Mammary epithelial cell (primary cell): ENCODE measurements at regions of chr2 and their contacts with region 1.

Region 1: DNA sequence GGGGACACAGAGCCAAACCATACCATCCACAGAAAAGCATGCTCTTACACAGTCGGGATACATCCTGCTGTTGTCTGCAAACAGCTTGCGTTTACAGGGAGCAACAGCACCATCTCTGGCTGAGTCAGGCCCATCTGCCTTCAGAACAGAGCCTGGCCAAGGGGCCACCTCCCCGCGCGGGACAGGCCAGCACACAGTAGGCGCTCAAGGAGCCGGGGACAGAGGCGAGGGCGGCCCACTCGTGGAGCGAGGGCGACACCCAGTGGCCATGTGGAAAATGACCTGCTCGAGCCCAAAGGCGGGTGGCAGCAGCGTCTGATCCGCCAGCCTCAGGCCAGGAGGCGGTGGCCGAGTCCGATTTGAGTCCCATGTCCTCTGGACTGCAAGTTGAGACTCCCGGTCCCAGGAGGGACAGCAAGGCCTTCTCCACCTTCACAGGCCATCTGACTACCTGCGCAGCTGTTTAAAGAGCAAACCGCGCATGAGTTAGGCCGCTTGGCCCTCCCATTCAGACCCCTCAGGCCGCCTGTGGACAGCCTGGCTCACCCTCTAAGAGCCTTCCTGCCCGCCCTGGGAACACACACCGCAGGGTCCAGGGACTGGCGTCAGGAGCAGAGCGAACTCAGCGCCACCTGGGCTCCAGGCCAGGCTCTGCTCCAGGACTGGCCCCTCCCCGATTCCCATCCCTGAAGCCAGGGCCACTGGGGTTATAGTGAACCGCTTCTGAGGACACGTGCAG is 38.3 kb downstream of the TTC32 start:
- DNase-seq: peak; percentile 26
- H3K4me3 ChIP-seq: no peak overlapping the region
- H3K27ac ChIP-seq: no peak overlapping the region
- H3K4me1 ChIP-seq: peaks cover 26% of the 10 kb centered on the region
- H3K27me3 ChIP-seq: no peaks in the 10 kb centered on the region
- CTCF ChIP-seq: peak; percentile 63 to 93

Region 2: GRCh38 chr2:18387441-18388206 is 1475.8 kb before region 1 on chr2:
- CTCF ChIA-PET with region 1: no interaction called
- dilution Hi-C with region 1: no loop called
- in situ Hi-C with region 1: no loop called
- intact Hi-C with region 1: loop called (anchors 1 kb)
- DNase-seq: peak; percentile 51
- H3K4me3 ChIP-seq: no peak overlapping the region
- H3K27ac ChIP-seq: no peak overlapping the region
- H3K4me1 ChIP-seq: no peaks in the 10 kb centered on the region
- H3K27me3 ChIP-seq: no peaks in the 10 kb centered on the region
- CTCF ChIP-seq: peak; percentile 93 to 95

Region 3: DNA sequence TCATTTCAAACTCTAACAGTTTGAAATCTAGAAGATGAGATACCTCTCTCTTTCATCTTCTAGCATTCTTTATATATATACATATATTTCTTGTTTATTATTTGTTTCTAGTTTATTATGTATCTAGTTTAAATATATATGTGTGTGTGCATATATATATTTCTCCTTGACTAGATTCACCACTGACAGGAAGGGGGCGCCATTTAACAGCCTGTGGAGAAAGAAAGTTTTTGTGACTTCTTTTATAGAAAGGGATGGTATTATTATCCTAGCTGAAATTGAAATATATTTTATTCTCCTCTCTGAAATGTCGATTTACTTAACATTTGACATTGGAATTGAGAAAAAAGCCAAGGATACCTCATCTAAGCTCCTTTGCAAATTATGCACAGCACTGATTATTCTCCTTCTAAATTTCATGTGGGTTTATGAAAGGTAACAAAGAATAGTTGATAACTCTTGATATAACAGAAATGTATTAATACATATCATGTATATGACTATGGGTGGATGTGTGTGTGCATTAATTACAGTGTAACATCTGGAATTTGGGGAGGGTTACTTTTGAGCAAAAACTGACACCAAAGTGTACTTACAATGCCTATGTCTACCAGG is 1113.5 kb before region 1 on chr2:
- CTCF ChIA-PET with region 1: no interaction called
- dilution Hi-C with region 1: no loop called
- in situ Hi-C with region 1: loop called in 1 of 2 experiments (anchors 10 kb)
- intact Hi-C with region 1: loop called (anchors 1 kb)
- DNase-seq: peak; percentile 35
- H3K4me3 ChIP-seq: no peak overlapping the region
- H3K27ac ChIP-seq: no peak overlapping the region
- H3K4me1 ChIP-seq: peaks cover 9% of the 10 kb centered on the region
- H3K27me3 ChIP-seq: no peaks in the 10 kb centered on the region
- CTCF ChIP-seq: peak; percentile 73 to 81

Region 4: GRCh38 chr2:19362755-19363473 is 500.6 kb before region 1 on chr2:
- CTCF ChIA-PET with region 1: no interaction called
- dilution Hi-C with region 1: loop called (anchors 5 kb)
- in situ Hi-C with region 1: loop called (anchors 5 kb)
- intact Hi-C with region 1: no loop called
- DNase-seq: peak; percentile 83
- H3K4me3 ChIP-seq: peak overlapping the region; percentile 53 to 67 (median 65)
- H3K27ac ChIP-seq: peak overlapping the region; percentile 45
- H3K4me1 ChIP-seq: peaks cover 24% of the 10 kb centered on the region
- H3K27me3 ChIP-seq: no peaks in the 10 kb centered on the region
- CTCF ChIP-seq: peak; percentile 67 to 79

Region 5: DNA sequence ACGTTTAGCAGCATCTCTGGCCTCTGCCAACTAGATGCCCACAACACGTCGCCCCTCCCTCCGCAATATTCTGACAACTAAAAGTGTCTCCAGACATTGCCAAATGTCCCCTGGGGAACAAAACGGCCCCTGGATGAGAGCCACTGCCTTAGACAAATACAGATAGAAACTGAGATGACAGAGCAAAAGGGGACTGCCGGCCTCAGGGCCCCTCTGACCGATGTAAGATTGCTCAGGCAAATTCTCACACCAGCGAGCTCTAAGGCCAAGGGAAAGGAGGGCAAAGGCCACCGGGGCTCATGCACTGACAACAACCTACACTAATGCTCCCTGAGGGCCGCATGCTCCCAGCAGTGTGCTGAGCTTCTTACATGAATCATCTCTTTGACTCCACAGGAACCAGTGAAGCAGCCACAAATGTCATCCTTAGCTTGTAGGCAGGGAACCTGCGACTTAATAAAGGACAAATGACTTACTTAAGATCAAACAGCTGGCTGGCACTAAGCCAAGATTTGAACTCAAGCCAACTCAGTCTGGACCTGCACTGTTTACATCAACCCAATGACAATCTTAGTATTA is 190.2 kb before region 1 on chr2:
- CTCF ChIA-PET with region 1: no interaction called
- dilution Hi-C with region 1: no loop called
- in situ Hi-C with region 1: no loop called
- intact Hi-C with region 1: loop called (anchors 2 kb)
- DNase-seq: no peak
- H3K4me3 ChIP-seq: no peak overlapping the region
- H3K27ac ChIP-seq: no peak overlapping the region
- H3K4me1 ChIP-seq: peaks cover 12% of the 10 kb centered on the region
- H3K27me3 ChIP-seq: no peaks in the 10 kb centered on the region
- CTCF ChIP-seq: no peak

Region 6: DNA sequence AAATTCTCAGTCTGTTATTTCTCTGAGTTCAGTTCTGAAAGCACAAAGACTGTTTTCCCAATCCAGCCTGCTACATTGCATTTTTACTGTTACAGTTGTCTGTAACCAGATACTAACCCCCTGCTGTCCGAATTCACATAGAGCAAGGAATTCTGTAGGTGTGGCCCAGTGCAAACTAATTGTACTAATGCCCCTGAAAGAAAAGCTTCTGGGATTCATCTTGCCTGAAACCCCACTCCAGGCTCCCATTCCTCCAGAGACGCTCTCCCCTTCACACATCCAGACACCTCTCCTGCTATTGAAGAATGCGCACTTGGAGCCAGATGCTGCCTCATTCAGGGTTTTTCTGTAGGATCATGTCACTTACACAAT is 88.7 kb before region 1 on chr2:
- CTCF ChIA-PET with region 1: no interaction called
- dilution Hi-C with region 1: no loop called
- in situ Hi-C with region 1: loop called in 1 of 2 experiments (anchors 5 kb)
- intact Hi-C with region 1: loop called (anchors 1 kb)
- DNase-seq: no peak
- H3K4me3 ChIP-seq: no peak overlapping the region
- H3K27ac ChIP-seq: no peak overlapping the region
- H3K4me1 ChIP-seq: no peaks in the 10 kb centered on the region
- H3K27me3 ChIP-seq: peaks cover 5% of the 10 kb centered on the region
- CTCF ChIP-seq: no peak